ENCODE measurements at regions of chr1 and their contacts with region 1.

Region 1: GRCh38 chr1:160951443-160952128 is 3.0 kb downstream of the ITLN2 start:
- DNase-seq: peak; percentile 87
- ATAC-seq: peak; percentile 88
- H3K4me3 Mint-ChIP-seq: no peak overlapping the region
- H3K27ac Mint-ChIP-seq: no peak overlapping the region
- H3K4me1 Mint-ChIP-seq: peaks cover 22% of the 10 kb centered on the region
- H3K27me3 Mint-ChIP-seq: no peaks in the 10 kb centered on the region

Region 2: DNA sequence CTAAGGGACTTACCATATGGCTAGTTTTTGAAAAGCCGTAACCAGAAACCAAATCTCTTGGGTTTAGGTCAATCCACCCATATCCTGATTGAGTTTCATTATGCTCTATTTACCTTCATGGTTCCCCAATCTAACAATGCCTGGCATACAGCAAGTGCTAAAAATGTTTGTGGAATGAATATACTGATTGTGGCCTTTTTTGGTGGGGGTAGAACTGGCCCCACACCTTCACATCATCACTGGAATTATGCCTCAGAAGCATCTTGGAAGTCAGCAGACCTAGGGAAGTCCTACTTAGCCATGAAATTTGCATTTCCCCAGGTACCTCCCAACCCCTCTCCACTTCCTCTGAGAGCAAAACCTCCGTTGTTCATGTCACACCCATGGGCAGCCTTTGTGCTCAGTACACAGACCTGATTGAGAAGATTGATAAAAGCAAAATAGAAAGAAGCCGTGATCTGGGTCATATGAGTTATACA is 287.0 kb before region 1 on chr1:
- CTCF ChIA-PET with region 1: no interaction called
- POLR2A ChIA-PET with region 1: no interaction called
- DNase-seq: peak; percentile 67
- ATAC-seq: peak; percentile 82
- H3K4me3 Mint-ChIP-seq: peak overlapping the region; percentile 75
- H3K27ac Mint-ChIP-seq: peak overlapping the region; percentile 92
- H3K4me1 Mint-ChIP-seq: peaks cover 71% of the 10 kb centered on the region
- H3K27me3 Mint-ChIP-seq: no peaks in the 10 kb centered on the region

Region 3: DNA sequence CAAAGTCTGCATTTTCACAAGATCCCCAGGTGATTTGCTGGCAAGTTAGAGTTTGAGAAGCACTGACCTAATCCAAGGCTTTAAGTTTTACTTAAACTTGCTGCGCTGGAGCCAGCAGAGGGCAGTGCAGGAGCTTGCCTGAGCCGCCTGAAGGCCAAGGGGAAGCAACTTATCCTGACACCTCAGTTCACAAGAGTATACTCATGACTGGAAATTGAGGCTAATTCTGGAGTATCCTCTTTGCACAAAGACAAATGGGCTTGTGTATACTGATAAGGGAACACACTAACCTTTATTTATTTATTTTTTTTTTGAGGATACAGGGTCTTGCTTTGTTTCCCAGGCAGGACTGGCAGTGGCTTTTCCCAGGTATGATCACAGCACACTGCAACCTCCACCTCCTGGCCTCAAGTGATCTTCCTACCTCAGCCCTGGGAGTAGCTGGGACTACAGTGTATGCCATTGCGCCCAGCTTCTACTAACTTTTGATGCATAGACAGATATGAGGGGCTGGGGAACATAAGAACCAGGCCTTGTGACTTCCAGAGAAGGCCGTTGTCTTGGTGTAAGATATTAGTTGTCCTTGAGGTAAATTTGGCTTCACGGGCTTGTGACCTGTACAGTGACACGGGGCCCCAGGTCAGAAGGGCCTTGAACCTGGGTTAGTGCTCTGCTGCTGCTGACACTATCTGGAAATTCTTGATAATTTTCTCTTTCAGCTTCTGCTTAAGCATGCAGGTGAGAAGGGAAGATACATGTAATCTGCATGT is 275.8 kb before region 1 on chr1:
- CTCF ChIA-PET with region 1: interaction called, 64 read pairs
- POLR2A ChIA-PET with region 1: no interaction called
- DNase-seq: peak; percentile 86
- ATAC-seq: peak; percentile 79
- H3K4me3 Mint-ChIP-seq: no peak overlapping the region
- H3K27ac Mint-ChIP-seq: peak overlapping the region; percentile 80
- H3K4me1 Mint-ChIP-seq: peaks cover 44% of the 10 kb centered on the region
- H3K27me3 Mint-ChIP-seq: no peaks in the 10 kb centered on the region

Region 4: GRCh38 chr1:160768295-160768657 is 183.3 kb before region 1 on chr1:
- CTCF ChIA-PET with region 1: interaction called, 226 read pairs
- POLR2A ChIA-PET with region 1: no interaction called
- DNase-seq: peak; percentile 93
- ATAC-seq: peak; percentile 93
- H3K4me3 Mint-ChIP-seq: peak overlapping the region; percentile 82
- H3K27ac Mint-ChIP-seq: peak overlapping the region; percentile 95
- H3K4me1 Mint-ChIP-seq: peaks cover 46% of the 10 kb centered on the region
- H3K27me3 Mint-ChIP-seq: no peaks in the 10 kb centered on the region

Region 5: DNA sequence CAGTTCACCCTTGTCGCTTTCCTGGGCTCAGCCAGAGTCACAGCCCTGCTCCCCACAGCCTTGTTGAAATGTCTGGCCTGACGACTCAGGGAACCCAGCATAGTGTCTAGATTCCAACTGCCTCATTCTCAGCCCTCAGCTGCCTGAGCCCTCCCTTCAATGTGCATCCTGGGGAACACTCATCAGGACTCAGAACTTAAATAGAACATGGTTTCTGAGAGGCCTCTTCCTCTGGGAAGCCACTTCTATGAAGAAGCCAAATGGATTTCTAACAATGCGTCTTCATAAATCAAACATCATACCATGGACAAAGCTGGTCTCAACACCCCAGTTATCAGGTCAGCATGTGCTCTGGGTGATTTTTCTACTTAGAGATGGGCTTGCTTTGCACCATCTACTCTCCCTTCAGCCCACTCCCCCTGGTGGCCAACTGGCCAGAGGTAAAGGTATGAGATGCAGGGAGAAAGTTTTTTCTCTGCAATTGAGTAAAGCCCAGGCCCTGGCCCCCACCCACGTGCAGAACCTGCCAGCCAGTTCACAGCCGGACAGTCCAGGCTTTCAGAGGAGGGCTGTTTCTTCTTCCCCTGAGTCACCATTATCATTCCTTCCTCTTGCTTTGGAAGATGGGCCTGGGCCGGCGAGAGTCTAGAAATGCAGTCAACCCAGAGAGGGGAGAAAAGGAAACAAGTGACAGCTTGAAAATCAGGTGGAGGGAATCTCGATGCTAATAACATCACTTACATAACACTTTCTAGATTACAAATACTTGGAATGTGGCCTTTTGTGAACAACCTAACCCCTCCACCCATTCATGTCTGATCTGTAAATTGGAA is 121.0 kb before region 1 on chr1:
- CTCF ChIA-PET with region 1: interaction called, 323 read pairs
- POLR2A ChIA-PET with region 1: interaction called, 8 read pairs
- DNase-seq: peak; percentile 87
- ATAC-seq: peak; percentile 83
- H3K4me3 Mint-ChIP-seq: no peak overlapping the region
- H3K27ac Mint-ChIP-seq: no peak overlapping the region
- H3K4me1 Mint-ChIP-seq: peaks cover 40% of the 10 kb centered on the region
- H3K27me3 Mint-ChIP-seq: no peaks in the 10 kb centered on the region

Region 6: GRCh38 chr1:160877221-160877620 is 74.4 kb before region 1 on chr1:
- CTCF ChIA-PET with region 1: interaction called, 15 read pairs
- POLR2A ChIA-PET with region 1: no interaction called
- DNase-seq: peak; percentile 52
- ATAC-seq: peak; percentile 90
- H3K4me3 Mint-ChIP-seq: no peak overlapping the region
- H3K27ac Mint-ChIP-seq: peak overlapping the region; percentile 59
- H3K4me1 Mint-ChIP-seq: peaks cover 29% of the 10 kb centered on the region
- H3K27me3 Mint-ChIP-seq: peaks cover 2% of the 10 kb centered on the region

Region 7: GRCh38 chr1:160997323-160998038 is 45.9 kb after region 1 on chr1:
- CTCF ChIA-PET with region 1: interaction called, 11 read pairs
- POLR2A ChIA-PET with region 1: no interaction called
- DNase-seq: peak; percentile 68
- ATAC-seq: peak; percentile 84
- H3K4me3 Mint-ChIP-seq: no peak overlapping the region
- H3K27ac Mint-ChIP-seq: no peak overlapping the region
- H3K4me1 Mint-ChIP-seq: no peaks in the 10 kb centered on the region
- H3K27me3 Mint-ChIP-seq: no peaks in the 10 kb centered on the region

Region 8: DNA sequence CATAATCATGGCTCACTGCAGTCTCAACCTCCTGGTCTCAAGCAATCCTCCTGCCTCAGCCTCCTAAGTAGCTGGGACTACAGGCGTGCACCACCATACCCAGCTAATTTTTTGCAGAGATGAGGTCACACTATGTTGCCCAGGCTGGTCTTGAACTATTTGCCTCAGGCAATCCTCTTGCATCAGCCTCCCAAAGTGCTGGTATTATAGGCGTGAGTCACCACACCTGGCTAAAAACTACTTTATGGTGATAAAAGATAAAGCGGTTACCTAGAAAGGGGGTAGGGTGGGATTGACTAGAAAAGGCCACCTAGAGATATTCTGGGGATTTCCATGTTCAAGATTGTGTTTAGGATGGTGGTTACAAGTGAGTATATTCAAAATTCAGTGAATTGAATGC is 82.2 kb after region 1 on chr1:
- CTCF ChIA-PET with region 1: no interaction called
- POLR2A ChIA-PET with region 1: no interaction called
- DNase-seq: no peak
- ATAC-seq: no peak
- H3K4me3 Mint-ChIP-seq: no peak overlapping the region
- H3K27ac Mint-ChIP-seq: no peak overlapping the region
- H3K4me1 Mint-ChIP-seq: peaks cover 35% of the 10 kb centered on the region
- H3K27me3 Mint-ChIP-seq: no peaks in the 10 kb centered on the region